Endothelial cell of umbilical vein (primary cell): ENCODE measurements at regions of chr13 and their contacts with region 1.

Region 1: GRCh38 chr13:20924758-20925394 is 22.3 kb upstream of the XPO4 start:
- DNase-seq: peak; percentile 81
- H3K4me3 ChIP-seq: no peak overlapping the region
- H3K27ac ChIP-seq: no peak overlapping the region
- H3K4me1 ChIP-seq: no peaks in the 10 kb centered on the region
- H3K27me3 ChIP-seq: no peaks in the 10 kb centered on the region
- CTCF ChIP-seq: peak; percentile 63 to 70
- POLR2A ChIP-seq: no peak

Region 2: DNA sequence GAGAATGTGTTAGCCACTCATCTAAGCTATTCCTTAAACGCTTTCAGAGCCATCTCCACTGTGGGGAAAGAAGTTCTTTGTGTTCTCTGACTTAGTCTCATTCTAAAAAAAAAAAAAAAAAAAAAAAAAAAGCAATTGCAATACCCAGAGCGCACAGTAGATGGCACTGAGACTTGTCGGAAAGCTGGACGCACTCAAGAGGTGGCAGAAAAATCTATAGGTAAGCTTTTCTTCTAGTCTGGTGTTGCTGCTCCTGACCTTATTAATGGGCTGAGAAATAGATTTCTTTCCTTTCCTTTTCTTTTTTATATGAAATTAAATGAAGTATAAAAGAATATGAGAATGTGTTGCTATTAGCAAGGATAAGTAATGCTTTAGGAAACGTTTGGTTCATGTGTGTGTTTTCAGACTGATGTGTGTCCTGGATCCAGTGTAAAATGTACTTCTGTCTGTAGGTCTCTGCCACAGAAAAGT is 727.5 kb before region 1 on chr13:
- CTCF ChIA-PET with region 1: interaction called, 109 read pairs
- POLR2A ChIA-PET with region 1: no interaction called
- dilution Hi-C with region 1: no loop called
- intact Hi-C with region 1: loop called (anchors 5 kb)
- DNase-seq: peak; percentile 54
- H3K4me3 ChIP-seq: no peak overlapping the region
- H3K27ac ChIP-seq: no peak overlapping the region
- H3K4me1 ChIP-seq: no peaks in the 10 kb centered on the region
- H3K27me3 ChIP-seq: peaks cover 45 to 68% of the 10 kb centered on the region in 2 experiments
- CTCF ChIP-seq: peak; percentile 64 to 75
- POLR2A ChIP-seq: no peak

Region 3: DNA sequence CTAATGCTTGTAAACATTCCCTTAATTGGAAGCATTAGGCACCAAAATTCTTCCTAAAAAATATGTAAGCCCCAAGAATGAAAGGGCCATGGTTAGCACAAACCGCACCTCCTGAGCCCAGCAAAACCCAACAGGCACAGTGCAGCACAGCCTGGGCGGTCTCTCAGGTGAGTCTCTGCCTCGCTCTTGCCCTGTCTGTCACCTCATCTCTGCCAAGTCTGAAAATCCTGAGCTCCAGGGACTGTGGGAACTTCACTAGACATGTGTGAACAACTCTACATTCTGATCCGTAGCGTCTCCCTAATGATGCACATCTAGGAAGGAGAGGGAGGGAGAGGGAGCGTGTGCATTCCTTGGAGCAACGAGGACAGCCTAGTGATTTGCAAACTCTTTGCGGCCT is 604.0 kb before region 1 on chr13:
- CTCF ChIA-PET with region 1: no interaction called
- POLR2A ChIA-PET with region 1: no interaction called
- dilution Hi-C with region 1: no loop called
- intact Hi-C with region 1: no loop called
- DNase-seq: no peak
- H3K4me3 ChIP-seq: no peak overlapping the region
- H3K27ac ChIP-seq: no peak overlapping the region
- H3K4me1 ChIP-seq: no peaks in the 10 kb centered on the region
- H3K27me3 ChIP-seq: no peaks in the 10 kb centered on the region
- CTCF ChIP-seq: no peak
- POLR2A ChIP-seq: no peak

Region 4: DNA sequence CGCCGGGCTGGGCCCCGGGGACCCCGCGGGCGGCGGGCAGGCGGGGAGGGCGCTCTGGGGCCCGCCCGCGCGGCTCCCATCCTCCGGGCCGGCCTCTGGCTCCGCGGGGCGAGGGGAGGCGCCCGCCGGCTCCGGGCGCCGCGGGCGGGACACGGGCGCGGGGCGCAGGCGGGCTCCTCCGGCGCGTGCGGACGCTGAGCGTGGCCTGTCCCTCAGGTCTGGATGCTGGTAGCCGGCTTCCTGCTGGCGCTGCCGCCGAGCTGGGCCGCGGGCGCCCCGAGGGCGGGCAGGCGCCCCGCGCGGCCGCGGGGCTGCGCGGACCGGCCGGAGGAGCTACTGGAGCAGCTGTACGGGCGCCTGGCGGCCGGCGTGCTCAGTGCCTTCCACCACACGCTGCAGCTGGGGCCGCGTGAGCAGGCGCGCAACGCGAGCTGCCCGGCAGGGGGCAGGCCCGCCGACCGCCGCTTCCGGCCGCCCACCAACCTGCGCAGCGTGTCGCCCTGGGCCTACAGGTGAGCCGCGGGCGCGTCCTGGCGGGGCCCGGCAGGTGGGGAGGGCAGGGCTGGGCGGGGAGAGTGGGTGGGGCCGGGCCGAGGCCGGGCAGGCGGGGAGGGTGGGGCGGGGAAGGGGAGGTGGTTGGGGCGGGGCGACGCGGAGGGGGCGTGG is 221.0 kb before region 1 on chr13:
- CTCF ChIA-PET with region 1: interaction called, 21 read pairs
- POLR2A ChIA-PET with region 1: no interaction called
- dilution Hi-C with region 1: no loop called
- intact Hi-C with region 1: no loop called
- DNase-seq: peak; percentile 66
- H3K4me3 ChIP-seq: peak overlapping the region in 2 of 3 experiments; percentile 49 to 52
- H3K27ac ChIP-seq: no peak overlapping the region
- H3K4me1 ChIP-seq: peaks cover 8% of the 10 kb centered on the region
- H3K27me3 ChIP-seq: no peaks in the 10 kb centered on the region
- CTCF ChIP-seq: peak; percentile 64 to 69
- POLR2A ChIP-seq: peak; percentile 26

Region 5: GRCh38 chr13:20843166-20843565 is 81.7 kb before region 1 on chr13:
- CTCF ChIA-PET with region 1: interaction called, 15 read pairs
- POLR2A ChIA-PET with region 1: no interaction called
- dilution Hi-C with region 1: no loop called
- intact Hi-C with region 1: no loop called
- DNase-seq: peak; percentile 88
- H3K4me3 ChIP-seq: no peak overlapping the region
- H3K27ac ChIP-seq: no peak overlapping the region
- H3K4me1 ChIP-seq: peaks cover 5% of the 10 kb centered on the region
- H3K27me3 ChIP-seq: no peaks in the 10 kb centered on the region
- CTCF ChIP-seq: no peak
- POLR2A ChIP-seq: no peak

Region 6: GRCh38 chr13:20902438-20903163 is 22.3 kb before region 1 on chr13 and contains the start of gene XPO4:
- CTCF ChIA-PET with region 1: interaction called, 10 read pairs
- POLR2A ChIA-PET with region 1: no interaction called
- dilution Hi-C with region 1: no loop called
- intact Hi-C with region 1: loop called (anchors 1 kb)
- DNase-seq: peak; percentile 81
- H3K4me3 ChIP-seq: peak within 1 kb of the TSS; percentile 60 to 100 (median 86)
- H3K27ac ChIP-seq: peak within 1 kb of the TSS; percentile 65
- H3K4me1 ChIP-seq: peaks cover 12% of the 10 kb centered on the region
- H3K27me3 ChIP-seq: no peaks in the 10 kb centered on the region
- CTCF ChIP-seq: no peak
- POLR2A ChIP-seq: peak; percentile 83
- total RNA-seq, gene XPO4: 21.3 and 22.5 TPM in 2 replicates

Region 7: DNA sequence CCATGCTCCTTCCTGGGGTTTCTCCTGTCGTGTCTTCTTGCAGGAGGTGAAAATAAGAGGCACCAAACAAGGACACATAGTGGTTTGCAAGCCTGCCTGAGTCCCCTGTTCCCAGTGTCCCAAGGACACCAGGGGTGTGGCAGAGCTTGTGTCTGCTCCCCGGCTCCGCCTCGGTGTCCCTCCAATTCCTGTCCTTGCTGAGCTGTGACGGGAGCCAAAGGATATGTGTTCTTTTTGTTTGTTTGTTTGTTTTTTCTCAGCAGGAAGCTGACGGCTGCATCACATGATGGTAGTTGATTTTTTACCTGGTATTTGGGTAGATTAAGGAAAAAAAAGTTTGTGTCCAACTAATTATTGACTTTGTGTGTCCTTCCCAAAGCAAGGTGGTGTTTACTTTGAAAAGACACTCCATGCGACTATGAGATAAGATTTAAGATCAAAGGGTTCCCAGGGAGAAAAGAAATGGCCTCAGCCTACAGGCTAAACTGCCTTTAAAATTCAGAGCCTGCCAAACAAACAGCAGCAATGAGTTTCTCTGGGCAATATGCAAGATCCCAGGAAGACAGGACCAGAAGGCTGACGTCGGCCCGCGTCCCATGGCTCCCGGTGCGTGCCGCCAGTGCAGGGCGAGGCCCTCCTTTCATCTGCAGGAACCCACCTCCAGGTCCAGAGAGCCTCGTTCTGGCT is 28.5 kb after region 1 on chr13:
- CTCF ChIA-PET with region 1: no interaction called
- POLR2A ChIA-PET with region 1: no interaction called
- dilution Hi-C with region 1: no loop called
- intact Hi-C with region 1: no loop called
- DNase-seq: no peak
- H3K4me3 ChIP-seq: no peak overlapping the region
- H3K27ac ChIP-seq: no peak overlapping the region
- H3K4me1 ChIP-seq: no peaks in the 10 kb centered on the region
- H3K27me3 ChIP-seq: peaks cover 3 to 4% of the 10 kb centered on the region in 2 experiments
- CTCF ChIP-seq: no peak
- POLR2A ChIP-seq: no peak